ENCODE measurements at regions of chr17 and their contacts with region 1.

Region 1: GRCh38 chr17:82351716-82352488 is 7.1 kb upstream of the TEX19 start:
- DNase-seq: peak; percentile 88 to 93
- ATAC-seq: peak; percentile 75 to 92
- H3K4me3 ChIP-seq: no peak overlapping the region
- H3K27ac ChIP-seq: no peak overlapping the region
- H3K4me1 ChIP-seq: peaks cover 19% of the 10 kb centered on the region; the same call in 2 of the 3 replicates
- CTCF ChIP-seq: peak; percentile 98
- EP300 ChIP-seq: no peak
- POLR2A ChIP-seq: no peak
- RAD21 ChIP-seq: peak; percentile 97

Region 2: DNA sequence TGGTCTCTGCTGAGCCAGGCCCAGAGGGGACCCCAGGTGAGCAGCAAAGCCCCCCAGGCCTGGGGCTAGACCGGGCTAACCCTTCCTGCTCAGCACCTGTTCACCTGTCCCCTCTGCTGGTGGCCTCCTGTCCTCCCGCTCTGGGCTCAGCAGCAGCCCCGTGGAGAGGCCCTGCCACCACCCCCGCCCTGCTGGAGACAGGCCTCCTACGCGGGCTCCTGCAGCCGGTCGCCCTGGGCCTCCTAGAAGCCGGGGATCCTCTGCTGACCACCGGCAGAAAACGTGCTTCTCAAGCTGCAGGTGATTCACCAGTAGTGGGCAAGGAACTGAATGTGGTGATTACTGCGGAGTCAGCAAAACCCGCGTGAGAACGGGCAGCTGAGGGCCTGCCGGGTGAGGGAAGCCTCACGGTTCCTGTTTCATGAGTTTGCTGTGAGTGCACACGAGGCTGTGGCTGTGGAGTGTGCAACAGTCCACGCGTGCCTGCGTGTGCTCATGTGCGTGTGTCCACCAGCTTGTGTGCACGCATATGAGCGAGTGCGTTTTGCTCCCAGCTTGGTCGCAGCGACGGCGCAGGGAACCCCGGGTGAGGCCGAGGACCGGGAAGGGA is 19.1 kb before region 1 on chr17:
- CTCF ChIA-PET with region 1: interaction called, 52 read pairs
- POLR2A ChIA-PET with region 1: no interaction called
- DNase-seq: peak; percentile 58 to 69
- ATAC-seq: peak; percentile 37 to 46
- H3K4me3 ChIP-seq: peak overlapping the region; percentile 66
- H3K27ac ChIP-seq: peak overlapping the region; percentile 89 to 93
- H3K4me1 ChIP-seq: peaks cover 55% of the 10 kb centered on the region
- CTCF ChIP-seq: no peak
- EP300 ChIP-seq: no peak
- POLR2A ChIP-seq: no peak
- RAD21 ChIP-seq: no peak

Region 3: DNA sequence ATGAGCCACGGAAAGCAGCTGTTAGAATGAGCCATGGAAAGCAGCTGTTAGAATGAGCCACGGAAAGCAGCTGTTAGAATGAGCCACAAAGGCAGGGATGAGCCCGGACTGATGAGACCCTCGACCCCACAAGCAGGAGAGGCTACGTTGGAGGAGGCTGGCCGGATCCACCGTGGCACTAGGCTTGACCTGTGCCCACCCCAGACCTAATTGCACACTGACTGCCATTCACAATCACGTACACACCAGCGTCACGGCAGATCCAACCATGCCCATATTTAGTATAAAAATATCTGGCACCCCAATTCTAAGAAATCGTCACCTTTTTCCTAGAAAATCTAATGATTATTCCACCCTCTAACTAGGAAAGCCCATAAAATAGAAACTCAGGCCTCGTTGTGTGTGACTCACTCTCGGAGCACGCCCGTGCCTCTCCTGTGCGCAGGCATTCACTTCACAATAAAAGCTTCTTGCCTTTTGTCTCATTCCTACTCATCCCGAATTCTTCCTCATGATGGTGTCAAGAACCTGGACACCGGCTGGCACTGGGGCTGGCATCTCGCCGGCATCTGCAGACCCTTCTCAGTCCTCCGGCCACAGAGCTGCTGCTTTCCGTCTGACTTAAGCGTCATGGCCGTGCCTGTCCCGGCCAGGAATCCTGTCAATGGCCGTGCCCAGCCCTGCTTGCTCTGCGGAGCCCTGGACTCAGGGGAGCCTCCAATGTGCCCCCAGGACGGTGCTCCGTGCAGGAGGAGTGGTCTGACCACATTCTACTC is 12.9 kb before region 1 on chr17:
- CTCF ChIA-PET with region 1: interaction called, 52 read pairs
- POLR2A ChIA-PET with region 1: no interaction called
- DNase-seq: peak; percentile 86 to 94
- ATAC-seq: peak; percentile 81 to 89
- H3K4me3 ChIP-seq: peak overlapping the region; percentile 37
- H3K27ac ChIP-seq: peak overlapping the region; percentile 86 to 92
- H3K4me1 ChIP-seq: peaks cover 42% of the 10 kb centered on the region
- CTCF ChIP-seq: no peak
- EP300 ChIP-seq: no peak
- POLR2A ChIP-seq: peak; percentile 29; the same call in 1 of the 2 replicates
- RAD21 ChIP-seq: no peak; a peak in 1 of 5 replicates

Region 4: GRCh38 chr17:82370471-82371332 is 18.8 kb after region 1 on chr17:
- CTCF ChIA-PET with region 1: interaction called, 45 read pairs
- POLR2A ChIA-PET with region 1: no interaction called
- DNase-seq: no peak
- ATAC-seq: no peak; a peak in 1 of 6 replicates
- H3K4me3 ChIP-seq: peak overlapping the region; percentile 13; the same call in 1 of the 3 replicates
- H3K27ac ChIP-seq: no peak overlapping the region
- H3K4me1 ChIP-seq: peaks cover 8% of the 10 kb centered on the region; the same call in 1 of the 3 replicates
- CTCF ChIP-seq: no peak
- EP300 ChIP-seq: no peak
- POLR2A ChIP-seq: no peak
- RAD21 ChIP-seq: no peak

Region 5: GRCh38 chr17:82388223-82388921 is 36.5 kb after region 1 on chr17:
- CTCF ChIA-PET with region 1: interaction called, 15 read pairs
- POLR2A ChIA-PET with region 1: no interaction called
- DNase-seq: peak in 1 of 2 experiments; percentile 41
- ATAC-seq: peak in 1 of 2 experiments; percentile 18; a peak in 3 of 6 replicates
- H3K4me3 ChIP-seq: no peak overlapping the region
- H3K27ac ChIP-seq: no peak overlapping the region
- H3K4me1 ChIP-seq: peaks cover 24% of the 10 kb centered on the region
- CTCF ChIP-seq: no peak
- EP300 ChIP-seq: no peak
- POLR2A ChIP-seq: no peak
- RAD21 ChIP-seq: peak in 1 of 2 experiments; percentile 16; a peak in 1 of 5 replicates

Region 6: DNA sequence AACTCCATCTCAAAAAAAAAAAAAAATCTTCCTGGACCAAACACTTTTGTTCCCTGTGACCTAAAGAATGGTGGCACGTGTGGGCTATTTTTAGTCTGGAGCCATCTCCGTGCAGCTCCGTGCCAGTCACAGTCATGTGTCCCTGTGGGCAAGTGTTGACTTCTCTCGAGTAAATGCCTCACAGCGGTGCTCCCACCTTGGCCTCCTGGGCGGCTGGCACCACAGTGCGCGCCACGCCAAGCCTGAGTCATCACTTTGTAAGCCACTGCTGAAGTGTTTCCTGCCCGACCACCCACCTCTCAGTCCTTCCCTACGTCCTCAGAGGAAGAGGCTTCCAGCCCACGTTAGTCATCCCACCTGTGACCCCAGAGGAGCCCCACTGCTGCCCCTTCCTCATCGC is 55.4 kb after region 1 on chr17:
- CTCF ChIA-PET with region 1: interaction called, 117 read pairs
- POLR2A ChIA-PET with region 1: interaction called, 3 read pairs
- DNase-seq: peak in 1 of 2 experiments; percentile 33
- ATAC-seq: peak in 1 of 2 experiments; percentile 24; a peak in 1 of 6 replicates
- H3K4me3 ChIP-seq: no peak overlapping the region
- H3K27ac ChIP-seq: peak overlapping the region in 1 of 2 experiments; percentile 8; a peak in 1 of 6 replicates
- H3K4me1 ChIP-seq: peaks cover 7% of the 10 kb centered on the region
- CTCF ChIP-seq: no peak
- EP300 ChIP-seq: 0 out of 5 replicates have a peak, but pooled peaks of 1 of the 2 experiments have one; percentile 9
- POLR2A ChIP-seq: no peak
- RAD21 ChIP-seq: no peak

Region 7: GRCh38 chr17:82468692-82469091 is 116.8 kb after region 1 on chr17:
- CTCF ChIA-PET with region 1: no interaction called
- POLR2A ChIA-PET with region 1: no interaction called
- DNase-seq: no peak
- ATAC-seq: no peak
- H3K4me3 ChIP-seq: no peak overlapping the region
- H3K27ac ChIP-seq: no peak overlapping the region
- H3K4me1 ChIP-seq: no peaks in the 10 kb centered on the region
- CTCF ChIP-seq: no peak
- EP300 ChIP-seq: no peak
- POLR2A ChIP-seq: no peak
- RAD21 ChIP-seq: no peak